ENCODE measurements at regions of chrX and their contacts with region 1.

Region 1: DNA sequence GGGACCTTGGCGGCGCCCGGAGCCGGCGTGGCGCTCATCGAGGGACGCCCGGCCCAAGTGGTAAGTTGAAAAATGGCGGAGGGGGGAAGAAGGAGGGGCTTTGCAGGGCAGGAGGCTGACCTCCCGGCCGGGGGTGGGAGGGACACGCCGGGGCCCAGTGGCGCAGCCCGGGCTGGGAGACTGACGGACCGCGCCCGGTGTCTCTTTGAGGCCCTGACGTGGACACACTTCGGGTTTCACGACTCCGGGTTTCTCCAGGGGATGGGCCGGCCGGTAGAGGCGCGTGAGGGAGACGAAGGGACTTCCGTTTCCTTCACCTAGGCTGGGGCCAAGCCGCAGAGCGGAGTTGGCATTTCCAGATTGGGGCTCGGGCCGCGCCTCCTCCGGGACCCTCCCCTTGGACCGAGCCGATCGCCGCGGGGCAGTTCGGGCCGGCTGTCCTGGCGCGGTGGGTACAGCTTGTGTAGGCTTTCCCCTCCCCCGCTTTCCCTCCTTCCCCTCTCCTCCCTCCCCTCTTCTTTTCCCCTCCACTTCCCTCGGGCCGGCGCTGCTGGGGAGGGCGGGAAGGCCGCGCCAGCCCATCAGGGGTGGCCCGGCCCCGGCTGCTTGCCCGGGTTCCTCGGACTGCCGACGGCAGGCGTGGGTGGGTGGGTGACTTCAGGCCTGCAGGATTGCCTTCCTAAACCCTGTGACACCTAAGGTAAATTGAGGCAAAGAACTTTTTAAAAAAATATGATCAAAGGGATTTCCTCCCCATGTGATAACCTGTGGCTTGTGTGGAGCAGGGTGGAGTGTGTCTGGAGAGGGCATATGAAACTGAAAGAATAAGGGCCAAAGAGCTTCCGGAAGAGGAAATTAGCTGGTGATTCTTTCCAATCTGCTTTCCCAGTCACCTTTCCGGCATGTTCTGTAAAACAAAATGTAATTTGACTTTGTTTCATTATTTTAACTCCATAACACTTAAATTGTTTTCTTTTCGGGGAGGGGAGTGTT is at the start of gene XIAP:
- DNase-seq: peak; percentile 69
- ATAC-seq: peak; percentile 82
- H3K4me3 Mint-ChIP-seq: peak within 1 kb of the TSS; percentile 89
- H3K27ac Mint-ChIP-seq: peak within 1 kb of the TSS; percentile 88
- H3K4me1 Mint-ChIP-seq: peaks cover 19% of the 10 kb centered on the region
- H3K27me3 Mint-ChIP-seq: no peaks in the 10 kb centered on the region
- CTCF ChIP-seq: no peak
- total RNA-seq, gene XIAP: 32.0 and 43.6 TPM in 2 replicates

Region 2: DNA sequence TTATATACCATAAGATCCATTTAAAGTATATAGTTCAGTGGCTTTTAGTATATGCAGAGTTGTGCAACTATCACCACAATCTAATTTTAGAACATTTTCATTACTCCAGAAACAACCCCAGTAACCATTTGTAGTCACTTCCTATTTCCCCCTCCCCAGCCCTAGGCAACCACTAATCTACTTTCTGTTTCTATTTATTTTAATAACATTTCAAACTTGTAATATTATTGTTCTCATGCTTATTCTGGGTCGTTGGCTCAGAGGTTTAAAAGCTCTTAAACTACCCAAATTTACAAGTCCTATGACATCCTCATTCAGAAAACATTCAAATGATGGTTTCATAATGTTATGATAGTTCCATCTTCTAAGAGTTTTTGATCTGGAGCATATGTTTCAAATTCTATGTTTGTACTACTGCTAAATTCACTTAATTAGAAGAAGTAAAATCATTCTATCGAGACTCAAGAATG is 18.1 kb after region 1 on chrX:
- CTCF ChIA-PET with region 1: no interaction called
- POLR2A ChIA-PET with region 1: interaction called, 6 read pairs
- intact Hi-C with region 1: loop called (anchors 1 kb)
- DNase-seq: no peak
- ATAC-seq: peak; percentile 73
- H3K4me3 Mint-ChIP-seq: peak overlapping the region; percentile 38
- H3K27ac Mint-ChIP-seq: peak overlapping the region; percentile 41
- H3K4me1 Mint-ChIP-seq: peaks cover 26% of the 10 kb centered on the region
- H3K27me3 Mint-ChIP-seq: no peaks in the 10 kb centered on the region
- CTCF ChIP-seq: no peak

Region 3: GRCh38 chrX:123884809-123885408 is 24.8 kb after region 1 on chrX:
- CTCF ChIA-PET with region 1: interaction called, 3 read pairs
- POLR2A ChIA-PET with region 1: interaction called, 3 read pairs
- intact Hi-C with region 1: loop called (anchors 2 kb)
- DNase-seq: no peak
- ATAC-seq: peak; percentile 42
- H3K4me3 Mint-ChIP-seq: no peak overlapping the region
- H3K27ac Mint-ChIP-seq: no peak overlapping the region
- H3K4me1 Mint-ChIP-seq: peaks cover 11% of the 10 kb centered on the region
- H3K27me3 Mint-ChIP-seq: no peaks in the 10 kb centered on the region
- CTCF ChIP-seq: no peak

Measured in activated B cell treated with CpG ODN at 0.5 μM for 24 hours (primary cell).